CD8-positive, alpha-beta T cell (primary cell): ENCODE measurements at regions of chr11 and their contacts with region 1.

Region 1: GRCh38 chr11:94493281-94494125 is at the starts of genes ANKRD49 and MRE11:
- DNase-seq: peak; percentile 91 to 99 (median 96)
- ATAC-seq: peak; percentile 99
- H3K4me3 ChIP-seq: peak within 1 kb of the TSS; percentile 57 to 97
- H3K4me3 Mint-ChIP-seq: peak within 1 kb of the TSS; percentile 95
- H3K27ac ChIP-seq: peak within 1 kb of the TSS; percentile 72 to 94
- H3K27ac Mint-ChIP-seq: peak within 1 kb of the TSS; percentile 99
- H3K4me1 ChIP-seq: peaks cover 33% of the 10 kb centered on the region
- H3K4me1 Mint-ChIP-seq: peaks cover 50% of the 10 kb centered on the region
- H3K27me3 ChIP-seq: no peaks in the 10 kb centered on the region
- H3K27me3 Mint-ChIP-seq: no peaks in the 10 kb centered on the region
- CTCF ChIP-seq: no peak
- total RNA-seq, gene ANKRD49: 45.6 to 50.9 TPM
- total RNA-seq, gene MRE11: 12.3 to 14.7 TPM

Region 2: GRCh38 chr11:93662177-93662575 is 831.3 kb before region 1 on chr11:
- CTCF ChIA-PET with region 1: no interaction called
- POLR2A ChIA-PET with region 1: no interaction called
- intact Hi-C with region 1: loop called (anchors 5 kb)
- DNase-seq: no peak
- ATAC-seq: no peak
- H3K4me3 ChIP-seq: peak overlapping the region; percentile 73 to 99
- H3K4me3 Mint-ChIP-seq: peak overlapping the region; percentile 86
- H3K27ac ChIP-seq: peak overlapping the region; percentile 75 to 97
- H3K27ac Mint-ChIP-seq: peak overlapping the region; percentile 90
- H3K4me1 ChIP-seq: peaks cover 6% of the 10 kb centered on the region
- H3K4me1 Mint-ChIP-seq: peaks cover 38% of the 10 kb centered on the region
- H3K27me3 ChIP-seq: no peaks in the 10 kb centered on the region
- H3K27me3 Mint-ChIP-seq: no peaks in the 10 kb centered on the region
- CTCF ChIP-seq: no peak

Region 3: DNA sequence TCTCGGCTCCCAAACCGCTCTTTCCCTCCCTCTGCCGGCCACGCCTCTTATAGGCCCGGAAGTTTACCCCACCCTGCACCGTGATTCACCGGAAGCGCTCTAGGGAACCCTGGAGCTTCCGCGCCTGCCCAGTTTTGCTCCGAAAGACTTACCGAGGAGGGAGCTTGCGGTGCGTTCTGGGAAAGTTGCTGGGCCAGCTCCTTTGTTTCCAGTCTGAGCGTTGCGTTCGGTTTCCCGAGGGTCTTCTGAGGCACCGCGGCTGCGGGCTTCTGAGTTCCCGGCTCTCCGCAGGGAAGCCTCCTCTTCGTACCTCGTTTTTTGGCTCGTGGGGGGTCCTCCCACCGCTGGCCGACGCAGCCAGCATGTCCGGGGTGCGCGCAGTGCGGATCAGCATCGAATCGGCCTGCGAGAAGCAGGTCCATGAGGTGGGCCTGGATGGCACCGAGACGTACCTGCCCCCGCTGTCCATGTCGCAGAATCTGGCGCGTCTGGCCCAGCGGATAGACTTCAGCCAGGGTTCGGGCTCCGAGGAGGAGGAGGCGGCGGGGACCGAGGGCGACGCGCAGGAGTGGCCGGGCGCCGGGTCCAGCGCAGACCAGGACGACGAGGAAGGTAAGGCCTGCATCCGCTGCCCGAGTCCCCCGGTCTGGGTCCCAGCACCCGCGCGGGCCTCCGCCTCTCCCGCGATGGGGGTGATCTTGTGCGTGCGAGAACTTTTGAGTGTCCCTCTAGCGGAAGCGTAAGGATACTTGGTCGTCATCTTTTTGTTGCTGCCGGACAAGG is 709.2 kb before region 1 on chr11 and contains the start of gene MED17:
- CTCF ChIA-PET with region 1: no interaction called
- POLR2A ChIA-PET with region 1: no interaction called
- intact Hi-C with region 1: loop called in 1 of 2 experiments (anchors 1 kb)
- DNase-seq: peak; percentile 68 to 94 (median 89)
- ATAC-seq: peak; percentile 94
- H3K4me3 ChIP-seq: peak within 1 kb of the TSS; percentile 99 to 100
- H3K4me3 Mint-ChIP-seq: peak within 1 kb of the TSS; percentile 96
- H3K27ac ChIP-seq: peak within 1 kb of the TSS; percentile 94 to 96
- H3K27ac Mint-ChIP-seq: peak within 1 kb of the TSS; percentile 94
- H3K4me1 ChIP-seq: peaks cover 28% of the 10 kb centered on the region
- H3K4me1 Mint-ChIP-seq: peaks cover 40% of the 10 kb centered on the region
- H3K27me3 ChIP-seq: no peaks in the 10 kb centered on the region
- H3K27me3 Mint-ChIP-seq: no peaks in the 10 kb centered on the region
- CTCF ChIP-seq: peak; percentile 52
- total RNA-seq, gene MED17: 63.7 to 65.9 TPM

Region 4: GRCh38 chr11:94128746-94129511 is 364.6 kb before region 1 on chr11 and contains the start of gene PANX1:
- CTCF ChIA-PET with region 1: no interaction called
- POLR2A ChIA-PET with region 1: interaction called, 5 read pairs
- intact Hi-C with region 1: loop called (anchors 1 to 5 kb)
- DNase-seq: peak; percentile 41 to 94 (median 75)
- ATAC-seq: peak; percentile 83
- H3K4me3 ChIP-seq: peak within 1 kb of the TSS; percentile 91 to 95
- H3K4me3 Mint-ChIP-seq: no peak within 1 kb of the TSS
- H3K27ac ChIP-seq: peak within 1 kb of the TSS; percentile 85 to 95
- H3K27ac Mint-ChIP-seq: peak within 1 kb of the TSS; percentile 92
- H3K4me1 ChIP-seq: peaks cover 34% of the 10 kb centered on the region
- H3K4me1 Mint-ChIP-seq: peaks cover 26% of the 10 kb centered on the region
- H3K27me3 ChIP-seq: no peaks in the 10 kb centered on the region
- H3K27me3 Mint-ChIP-seq: no peaks in the 10 kb centered on the region
- CTCF ChIP-seq: no peak
- total RNA-seq, gene PANX1: 8.3 to 9.3 TPM

Region 5: DNA sequence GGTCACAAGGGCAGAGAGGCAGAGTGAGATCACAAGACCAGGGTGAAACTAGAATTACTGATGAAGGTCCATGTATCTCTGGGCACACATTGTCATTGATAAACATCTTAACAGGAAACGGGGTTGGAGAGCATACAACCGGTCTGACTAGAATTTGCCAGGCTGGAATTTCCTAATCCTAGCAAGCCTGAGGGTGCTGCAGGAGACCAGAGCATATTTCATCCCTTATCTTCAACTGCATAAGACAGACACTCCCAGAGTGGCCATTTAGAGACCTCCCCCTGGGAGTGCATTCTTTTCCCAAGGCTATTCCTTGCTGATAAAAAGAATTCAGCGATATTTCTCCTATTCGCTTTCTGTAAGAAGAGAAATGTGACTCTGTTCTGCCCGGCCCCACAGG is 273.7 kb before region 1 on chr11:
- CTCF ChIA-PET with region 1: no interaction called
- POLR2A ChIA-PET with region 1: no interaction called
- intact Hi-C with region 1: no loop called
- DNase-seq: no peak
- ATAC-seq: no peak
- H3K4me3 ChIP-seq: no peak overlapping the region
- H3K4me3 Mint-ChIP-seq: no peak overlapping the region
- H3K27ac ChIP-seq: no peak overlapping the region
- H3K27ac Mint-ChIP-seq: no peak overlapping the region
- H3K4me1 ChIP-seq: no peaks in the 10 kb centered on the region
- H3K4me1 Mint-ChIP-seq: no peaks in the 10 kb centered on the region
- H3K27me3 ChIP-seq: no peaks in the 10 kb centered on the region
- H3K27me3 Mint-ChIP-seq: peaks cover 2% of the 10 kb centered on the region
- CTCF ChIP-seq: no peak

Region 6: GRCh38 chr11:94477589-94477988 is 15.9 kb before region 1 on chr11:
- CTCF ChIA-PET with region 1: no interaction called
- POLR2A ChIA-PET with region 1: no interaction called
- intact Hi-C with region 1: no loop called
- DNase-seq: no peak
- ATAC-seq: no peak
- H3K4me3 ChIP-seq: no peak overlapping the region
- H3K4me3 Mint-ChIP-seq: no peak overlapping the region
- H3K27ac ChIP-seq: no peak overlapping the region
- H3K27ac Mint-ChIP-seq: no peak overlapping the region
- H3K4me1 ChIP-seq: no peaks in the 10 kb centered on the region
- H3K4me1 Mint-ChIP-seq: peaks cover 17% of the 10 kb centered on the region
- H3K27me3 ChIP-seq: no peaks in the 10 kb centered on the region
- H3K27me3 Mint-ChIP-seq: no peaks in the 10 kb centered on the region
- CTCF ChIP-seq: no peak

Region 7: DNA sequence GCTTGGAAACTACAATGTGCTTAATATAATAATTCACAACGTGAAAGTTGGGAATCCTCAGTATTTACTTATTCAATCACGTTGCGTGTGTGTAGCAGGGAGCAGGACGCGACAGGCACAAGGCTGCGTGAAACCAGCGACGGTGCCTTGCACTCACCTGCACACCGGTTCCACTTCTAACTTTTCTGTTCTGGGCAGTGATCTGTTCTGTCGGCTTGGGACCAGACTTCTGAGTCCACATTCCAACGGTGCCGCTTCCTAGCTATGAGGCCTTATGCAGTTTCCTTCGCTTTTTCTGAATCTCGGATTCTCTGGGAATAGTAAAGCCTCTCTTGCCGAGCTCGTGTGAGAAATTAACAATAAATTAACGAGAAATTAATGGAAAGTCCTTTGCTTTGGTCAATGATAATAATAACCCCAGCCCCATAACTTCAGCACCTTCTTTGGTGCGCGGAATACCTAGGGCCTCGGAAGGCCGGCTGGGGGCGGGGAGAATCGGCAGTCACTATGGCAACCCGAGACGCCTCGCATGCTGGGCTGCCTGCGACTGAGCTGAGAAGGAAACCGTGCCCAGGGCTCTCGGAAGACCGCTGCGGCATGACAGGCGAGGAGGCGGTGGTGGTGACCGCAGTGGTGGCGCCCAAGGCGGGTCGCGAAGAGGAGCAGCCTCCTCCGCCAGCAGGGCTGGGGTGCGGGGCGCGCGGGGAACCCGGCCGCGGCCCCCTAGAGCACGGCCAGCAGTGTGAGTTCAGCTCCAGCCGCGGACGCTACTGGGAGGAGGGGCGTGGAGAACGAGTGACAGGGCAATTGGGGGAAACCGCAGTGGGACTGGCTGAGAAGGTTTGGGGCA is 18.7 kb after region 1 on chr11 and contains the start of gene C11orf97:
- CTCF ChIA-PET with region 1: interaction called, 4 read pairs
- POLR2A ChIA-PET with region 1: interaction called, 3 read pairs
- intact Hi-C with region 1: loop called in 1 of 2 experiments (anchors 2 kb)
- DNase-seq: peak; percentile 12 to 75 (median 54)
- ATAC-seq: peak; percentile 81
- H3K4me3 ChIP-seq: peak within 1 kb of the TSS; percentile 34 to 38
- H3K4me3 Mint-ChIP-seq: peak within 1 kb of the TSS; percentile 81
- H3K27ac ChIP-seq: no peak within 1 kb of the TSS
- H3K27ac Mint-ChIP-seq: no peak within 1 kb of the TSS
- H3K4me1 ChIP-seq: peaks cover 16% of the 10 kb centered on the region
- H3K4me1 Mint-ChIP-seq: peaks cover 15% of the 10 kb centered on the region
- H3K27me3 ChIP-seq: no peaks in the 10 kb centered on the region
- H3K27me3 Mint-ChIP-seq: peaks cover 11% of the 10 kb centered on the region
- CTCF ChIP-seq: no peak
- total RNA-seq, gene C11orf97: not detected

Region 8: DNA sequence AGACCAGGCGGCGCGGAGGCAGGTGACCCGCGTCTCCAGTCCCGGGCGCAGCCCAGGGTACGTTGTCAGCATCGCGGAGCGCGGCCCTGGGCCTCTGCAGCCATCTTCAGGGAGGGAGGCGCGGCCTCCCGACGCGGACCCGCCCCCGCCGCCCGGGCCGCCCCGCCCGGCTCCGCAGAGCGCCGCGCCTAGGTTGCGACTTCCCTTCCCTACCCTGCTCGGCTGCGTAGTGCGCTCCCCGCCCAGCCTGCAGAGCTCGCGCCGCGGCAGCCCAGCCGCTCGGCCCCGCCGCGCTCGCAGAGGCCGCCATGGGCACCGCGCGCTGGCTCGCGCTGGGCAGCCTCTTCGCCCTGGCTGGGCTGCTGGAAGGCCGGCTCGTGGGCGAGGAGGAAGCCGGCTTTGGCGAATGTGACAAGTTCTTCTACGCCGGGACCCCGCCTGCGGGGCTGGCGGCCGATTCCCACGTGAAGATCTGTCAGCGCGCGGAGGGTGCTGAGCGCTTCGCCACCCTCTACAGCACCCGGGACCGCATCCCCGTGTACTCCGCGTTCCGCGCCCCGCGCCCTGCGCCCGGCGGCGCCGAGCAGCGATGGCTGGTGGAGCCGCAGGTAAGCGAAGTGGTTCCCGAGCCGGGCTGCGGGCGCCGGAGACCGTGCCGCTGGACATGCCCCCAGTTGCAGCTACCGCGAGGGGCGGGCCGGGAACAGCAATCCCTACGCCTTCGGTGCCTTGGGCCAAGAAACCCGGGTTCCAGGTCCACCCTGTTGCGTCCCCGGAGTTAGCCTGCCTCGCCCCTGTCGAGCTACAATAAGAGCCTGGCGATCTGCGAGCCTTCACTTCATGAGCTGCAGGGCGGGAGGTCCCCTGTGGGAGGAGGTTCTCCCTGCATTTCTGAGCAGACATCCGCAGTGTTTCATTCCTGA is 596.4 kb after region 1 on chr11 and contains the start of gene ENDOD1:
- CTCF ChIA-PET with region 1: no interaction called
- POLR2A ChIA-PET with region 1: no interaction called
- intact Hi-C with region 1: loop called in 1 of 2 experiments (anchors 1 kb)
- DNase-seq: peak; percentile 75 to 92 (median 83)
- ATAC-seq: peak; percentile 94
- H3K4me3 ChIP-seq: peak within 1 kb of the TSS; percentile 66 to 78
- H3K4me3 Mint-ChIP-seq: peak within 1 kb of the TSS; percentile 93
- H3K27ac ChIP-seq: peak within 1 kb of the TSS; percentile 77 to 84
- H3K27ac Mint-ChIP-seq: peak within 1 kb of the TSS; percentile 99
- H3K4me1 ChIP-seq: peaks cover 25% of the 10 kb centered on the region
- H3K4me1 Mint-ChIP-seq: peaks cover 50% of the 10 kb centered on the region
- H3K27me3 ChIP-seq: no peaks in the 10 kb centered on the region
- H3K27me3 Mint-ChIP-seq: no peaks in the 10 kb centered on the region
- CTCF ChIP-seq: no peak
- total RNA-seq, gene ENDOD1: 5.6 to 5.9 TPM

Region 9: DNA sequence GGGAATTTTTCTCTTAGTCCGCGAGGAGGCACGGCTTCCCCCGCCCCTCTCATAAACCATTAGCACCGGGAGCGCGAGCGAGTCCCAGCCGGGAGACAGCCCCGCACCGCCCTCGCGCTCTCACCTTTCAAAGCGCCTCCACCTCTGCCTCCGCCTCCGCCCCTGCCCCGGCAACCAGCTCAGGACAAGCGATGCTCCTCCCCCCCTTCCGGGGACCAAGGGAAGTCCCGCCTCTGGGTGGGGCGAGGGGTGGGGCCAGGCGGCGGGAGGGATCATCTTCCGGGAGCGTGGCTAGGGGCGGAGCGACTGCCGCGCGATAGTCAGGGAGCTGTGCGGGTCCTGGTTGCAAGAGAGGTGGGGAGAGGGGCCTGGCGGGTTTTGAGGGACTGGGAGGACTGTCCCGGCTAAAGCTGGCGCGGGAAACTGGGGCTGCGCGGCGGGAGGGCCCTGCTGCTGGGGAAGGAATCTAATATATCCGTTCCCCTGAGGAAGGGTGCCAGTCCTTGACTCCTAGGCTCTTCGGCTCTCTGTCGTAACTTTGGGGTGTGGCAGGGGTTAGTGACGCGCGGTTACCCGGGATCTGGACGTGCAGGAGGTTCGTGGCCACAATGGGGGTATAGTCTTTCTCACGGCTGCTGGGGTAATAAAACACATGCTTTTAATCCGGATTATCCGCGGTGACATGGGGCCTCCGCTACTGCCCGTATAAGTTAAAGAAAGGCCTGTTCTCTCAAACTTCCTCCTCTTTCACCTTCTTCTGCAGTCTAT is 1896.4 kb after region 1 on chr11 and contains the starts of genes CCDC82 and JRKL:
- CTCF ChIA-PET with region 1: no interaction called
- POLR2A ChIA-PET with region 1: no interaction called
- intact Hi-C with region 1: loop called (anchors 2 to 5 kb)
- DNase-seq: peak; percentile 96 to 99 (median 98)
- ATAC-seq: peak; percentile 97
- H3K4me3 ChIP-seq: peak within 1 kb of the TSS; percentile 87 to 93
- H3K4me3 Mint-ChIP-seq: peak within 1 kb of the TSS; percentile 94
- H3K27ac ChIP-seq: peak within 1 kb of the TSS; percentile 78 to 79
- H3K27ac Mint-ChIP-seq: peak within 1 kb of the TSS; percentile 96
- H3K4me1 ChIP-seq: peaks cover 15% of the 10 kb centered on the region
- H3K4me1 Mint-ChIP-seq: peaks cover 52% of the 10 kb centered on the region
- H3K27me3 ChIP-seq: no peaks in the 10 kb centered on the region
- H3K27me3 Mint-ChIP-seq: no peaks in the 10 kb centered on the region
- CTCF ChIP-seq: no peak
- total RNA-seq, gene CCDC82: 20.0 to 23.0 TPM
- total RNA-seq, gene JRKL: 2.5 to 2.6 TPM